Kidney (tissue), 22 donors: ENCODE measurements at regions of chr12 and their contacts with region 1.

Region 1: GRCh38 chr12:3034067-3034750 is 43.0 kb upstream of the TSPAN9 start:
- DNase-seq: peak; percentile 84 to 89 (median 86)
- H3K4me3 ChIP-seq: no peak overlapping the region
- H3K27ac ChIP-seq: no peak overlapping the region
- H3K4me1 ChIP-seq: peaks cover 0 to 7% (median 0%) of the 10 kb centered on the region in 3 donors
- H3K27me3 ChIP-seq: no peaks in the 10 kb centered on the region
- CTCF ChIP-seq: peak; percentile 61

Region 2: DNA sequence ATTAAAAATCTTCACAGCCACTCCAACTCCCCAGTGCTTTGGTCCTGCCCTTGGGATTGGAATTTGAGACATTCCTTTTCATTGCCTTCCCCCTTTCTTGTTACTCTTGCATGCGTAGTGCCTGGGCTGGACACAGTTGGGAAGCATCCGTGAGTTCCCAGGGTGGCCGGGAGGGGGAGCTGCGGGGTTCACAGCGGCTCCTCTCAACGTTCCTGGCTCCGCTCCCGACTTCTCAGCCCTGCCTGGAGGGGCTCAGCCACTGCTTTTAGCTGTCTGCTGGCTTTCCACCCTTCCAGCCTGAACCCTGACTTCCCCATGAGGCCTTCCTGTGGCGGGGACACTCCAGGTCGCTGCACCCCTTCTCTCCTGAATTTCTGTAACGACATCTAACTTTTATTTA is 180.6 kb before region 1 on chr12:
- intact Hi-C with region 1: loop called (anchors 10 kb)
- DNase-seq: peak; percentile 86 to 93 (median 89)
- H3K4me3 ChIP-seq: no peak overlapping the region
- H3K27ac ChIP-seq: no peak overlapping the region
- H3K4me1 ChIP-seq: peaks cover 0 to 8% (median 5%) of the 10 kb centered on the region in 3 donors
- H3K27me3 ChIP-seq: no peaks in the 10 kb centered on the region
- CTCF ChIP-seq: peak; percentile 82